Mammary epithelial cell (primary cell): ENCODE measurements at regions of chr11 and their contacts with region 1.

Region 1: GRCh38 chr11:62081378-62082291 is 42.2 kb upstream of the INCENP start:
- DNase-seq: peak; percentile 57
- H3K4me3 ChIP-seq: no peak overlapping the region
- H3K27ac ChIP-seq: no peak overlapping the region
- H3K4me1 ChIP-seq: peaks cover 6% of the 10 kb centered on the region
- H3K27me3 ChIP-seq: no peaks in the 10 kb centered on the region
- CTCF ChIP-seq: peak; percentile 82 to 91

Region 2: DNA sequence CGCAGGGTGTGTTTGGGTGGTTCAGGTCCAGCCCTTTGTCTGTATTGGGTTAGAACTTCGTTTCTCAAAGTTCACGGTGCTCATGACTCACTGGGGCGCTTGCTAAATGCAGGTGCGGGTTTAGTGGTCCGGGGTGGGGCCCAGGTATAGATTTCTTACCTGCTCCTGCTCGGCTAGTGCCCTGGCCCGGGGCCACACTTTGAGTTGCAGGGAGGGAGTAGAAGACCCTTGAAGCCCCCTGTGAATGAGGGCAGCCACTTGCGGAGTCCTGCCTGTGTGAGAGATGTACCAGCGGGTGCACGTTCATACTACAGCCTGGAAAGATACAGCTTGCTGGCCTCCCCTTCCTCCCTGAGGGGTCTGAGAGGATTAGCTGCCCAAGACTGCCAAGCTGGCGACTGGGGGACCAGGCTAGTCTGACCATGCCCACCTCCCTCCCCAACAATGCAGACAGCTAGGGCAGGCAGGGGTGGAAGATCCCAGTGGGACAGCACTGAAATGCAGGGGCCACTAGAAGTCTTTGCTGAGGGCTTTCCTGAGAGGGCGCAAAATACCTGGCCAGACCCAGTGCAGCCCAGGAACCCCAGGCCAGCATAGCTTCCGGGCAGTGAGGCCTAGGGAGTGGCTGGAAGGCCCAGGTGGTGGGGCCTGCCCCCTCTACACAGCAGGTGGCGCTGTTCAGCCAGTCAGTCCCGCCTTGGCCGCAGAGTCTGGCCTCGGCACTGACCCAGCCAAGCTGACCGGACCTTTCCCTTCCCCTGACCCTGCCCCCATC is 334.3 kb before region 1 on chr11:
- CTCF ChIA-PET with region 1: interaction called, 4 read pairs
- dilution Hi-C with region 1: no loop called
- in situ Hi-C with region 1: no loop called
- intact Hi-C with region 1: loop called (anchors 1 kb)
- DNase-seq: peak; percentile 31
- H3K4me3 ChIP-seq: no peak overlapping the region
- H3K27ac ChIP-seq: no peak overlapping the region
- H3K4me1 ChIP-seq: no peaks in the 10 kb centered on the region
- H3K27me3 ChIP-seq: no peaks in the 10 kb centered on the region
- CTCF ChIP-seq: peak; percentile 80 to 87

Region 3: DNA sequence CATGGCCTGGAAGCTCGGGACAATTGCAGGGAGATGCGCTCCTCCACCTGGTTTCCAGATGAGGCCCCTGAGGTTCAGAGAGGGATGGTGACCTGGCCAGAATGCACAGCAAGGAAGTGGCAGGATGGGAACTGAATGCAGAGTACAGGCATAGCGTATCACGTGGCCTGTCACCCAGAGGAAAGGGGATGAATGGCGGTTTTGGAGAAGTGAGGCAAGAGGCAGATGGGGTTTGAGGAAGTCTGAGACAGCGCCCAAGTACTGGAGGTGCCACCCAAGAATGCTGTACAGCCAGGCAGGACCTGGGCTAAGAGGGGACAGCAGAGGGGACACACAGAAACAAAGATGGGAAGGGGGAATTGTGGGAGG is 169.1 kb before region 1 on chr11:
- CTCF ChIA-PET with region 1: no interaction called
- dilution Hi-C with region 1: loop called (anchors 5 kb)
- in situ Hi-C with region 1: no loop called
- intact Hi-C with region 1: no loop called
- DNase-seq: no peak
- H3K4me3 ChIP-seq: no peak overlapping the region
- H3K27ac ChIP-seq: no peak overlapping the region
- H3K4me1 ChIP-seq: peaks cover 5% of the 10 kb centered on the region
- H3K27me3 ChIP-seq: peaks cover under 1% of the 10 kb centered on the region
- CTCF ChIP-seq: no peak

Region 4: DNA sequence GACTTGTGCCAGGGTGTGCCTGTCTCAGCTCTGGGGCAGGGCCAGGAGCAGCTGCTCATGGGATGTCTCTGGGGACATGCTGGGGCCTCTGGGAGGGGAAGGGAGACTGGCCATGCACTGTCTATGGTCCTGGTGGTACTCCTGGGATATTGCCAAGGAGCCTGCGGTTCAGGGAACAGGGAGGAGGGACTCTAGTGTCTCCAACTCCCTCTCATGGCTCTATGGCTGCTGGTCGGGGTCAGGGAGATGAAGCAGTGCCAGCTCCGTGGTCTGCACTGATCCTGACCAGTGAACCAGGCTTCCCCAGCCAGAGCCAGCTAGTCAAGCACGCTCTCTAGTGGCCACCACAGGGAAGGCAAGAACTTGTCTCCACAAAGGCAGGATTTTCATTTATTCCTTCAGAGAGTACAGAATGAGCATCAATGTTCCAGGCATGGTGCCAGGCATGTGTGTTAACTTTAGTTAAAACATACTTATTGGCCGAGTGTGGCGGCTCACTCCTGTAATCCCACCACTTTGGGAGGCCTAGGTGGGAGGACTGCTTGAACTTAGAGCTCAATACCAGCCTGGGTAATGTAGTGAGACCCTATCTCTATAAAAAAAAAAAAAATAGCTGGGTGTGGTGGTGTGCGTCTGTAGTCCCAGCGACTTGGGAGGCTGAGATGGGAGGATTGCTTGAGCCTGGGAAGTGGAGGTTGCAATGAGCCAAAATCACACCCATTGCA is 134.0 kb before region 1 on chr11:
- CTCF ChIA-PET with region 1: interaction called, 4 read pairs
- dilution Hi-C with region 1: no loop called
- in situ Hi-C with region 1: no loop called
- intact Hi-C with region 1: loop called (anchors 1 kb)
- DNase-seq: peak; percentile 59
- H3K4me3 ChIP-seq: no peak overlapping the region
- H3K27ac ChIP-seq: no peak overlapping the region
- H3K4me1 ChIP-seq: no peaks in the 10 kb centered on the region
- H3K27me3 ChIP-seq: no peaks in the 10 kb centered on the region
- CTCF ChIP-seq: peak; percentile 97 to 98

Region 5: DNA sequence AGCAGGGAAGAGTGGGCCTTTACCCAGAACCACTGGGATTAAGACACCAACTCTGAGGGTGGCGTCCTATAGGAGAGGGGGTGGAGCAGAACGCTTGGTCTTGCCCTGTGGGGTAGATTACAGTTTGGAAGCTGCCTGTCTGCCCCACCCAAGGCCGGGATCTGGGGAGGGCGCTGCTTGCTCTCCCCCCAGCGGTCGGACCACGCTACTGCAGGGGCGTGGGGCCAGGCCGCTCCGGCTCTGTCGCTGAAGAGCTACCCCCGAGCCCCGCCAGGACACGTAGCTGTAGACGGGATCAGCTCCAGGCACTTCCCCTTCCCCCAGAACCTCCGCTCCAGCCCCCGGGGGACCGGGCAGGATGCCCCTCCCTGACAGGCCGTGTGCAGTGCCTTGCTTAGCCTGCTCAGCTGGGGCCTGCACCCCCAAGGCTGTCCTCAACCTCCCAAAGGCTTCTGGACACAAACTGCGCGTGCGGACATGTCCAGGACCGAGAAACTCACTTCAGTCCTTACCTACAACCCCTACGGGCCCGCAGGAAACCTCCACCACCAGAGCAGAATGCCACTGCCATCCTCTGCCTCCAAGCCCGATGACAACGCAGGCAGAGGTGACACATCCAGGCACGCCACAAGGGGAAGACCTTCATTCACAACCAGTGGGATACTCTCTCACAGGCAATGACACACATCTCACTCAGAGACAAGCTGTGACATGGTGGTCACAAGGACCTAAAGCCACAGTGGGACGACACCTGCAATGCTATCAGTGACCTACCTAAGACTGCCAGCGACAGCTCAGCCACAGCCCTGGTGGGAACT is 461.3 kb after region 1 on chr11:
- CTCF ChIA-PET with region 1: no interaction called
- dilution Hi-C with region 1: no loop called
- in situ Hi-C with region 1: no loop called
- intact Hi-C with region 1: no loop called
- DNase-seq: peak; percentile 78
- H3K4me3 ChIP-seq: peak overlapping the region; percentile 82 to 99 (median 91)
- H3K27ac ChIP-seq: peak overlapping the region; percentile 86
- H3K4me1 ChIP-seq: peaks cover 59% of the 10 kb centered on the region
- H3K27me3 ChIP-seq: no peaks in the 10 kb centered on the region
- CTCF ChIP-seq: peak; percentile 78 to 98